ENCODE measurements at regions of chr17 and their contacts with region 1.

Region 1: DNA sequence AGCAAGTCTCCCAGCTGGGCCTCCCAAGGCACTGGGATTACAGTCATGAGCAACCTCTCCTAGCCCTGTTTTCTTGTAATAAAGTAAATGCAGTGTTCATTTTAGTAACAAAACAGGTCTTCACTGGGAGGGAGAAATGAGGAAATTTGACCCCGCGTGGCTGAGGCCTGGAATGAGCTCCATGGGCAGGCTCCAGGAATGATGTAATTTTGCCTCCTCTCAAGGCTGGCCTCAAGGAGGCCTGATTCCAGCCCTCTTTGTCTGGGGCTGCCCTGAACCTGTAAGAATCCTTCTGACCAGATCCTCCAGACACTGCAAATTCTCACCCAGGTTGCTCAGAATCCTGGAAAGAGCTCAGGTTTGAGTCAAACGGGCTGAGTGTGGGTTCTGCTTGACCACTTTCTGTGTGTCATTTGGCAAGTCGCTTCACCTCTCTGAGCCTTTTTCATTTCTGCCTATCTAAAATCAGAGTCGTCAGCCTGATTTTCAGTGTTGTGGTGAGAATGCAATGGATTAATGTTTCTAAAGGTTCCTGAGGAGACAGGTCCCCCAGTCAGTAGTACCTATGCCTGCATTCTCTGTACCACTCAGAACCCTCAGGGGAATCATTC is 57.1 kb downstream of the RAB11FIP4 start:
- DNase-seq: no peak
- H3K4me3 ChIP-seq: no peak overlapping the region
- H3K27ac ChIP-seq: no peak overlapping the region
- H3K4me1 ChIP-seq: peaks cover 0 to 4% (median 1%) of the 10 kb centered on the region in 4 donors
- H3K27me3 ChIP-seq: no peaks in the 10 kb centered on the region
- CTCF ChIP-seq: no peak
- EP300 ChIP-seq: no peak
- POLR2A ChIP-seq: no peak

Region 2: DNA sequence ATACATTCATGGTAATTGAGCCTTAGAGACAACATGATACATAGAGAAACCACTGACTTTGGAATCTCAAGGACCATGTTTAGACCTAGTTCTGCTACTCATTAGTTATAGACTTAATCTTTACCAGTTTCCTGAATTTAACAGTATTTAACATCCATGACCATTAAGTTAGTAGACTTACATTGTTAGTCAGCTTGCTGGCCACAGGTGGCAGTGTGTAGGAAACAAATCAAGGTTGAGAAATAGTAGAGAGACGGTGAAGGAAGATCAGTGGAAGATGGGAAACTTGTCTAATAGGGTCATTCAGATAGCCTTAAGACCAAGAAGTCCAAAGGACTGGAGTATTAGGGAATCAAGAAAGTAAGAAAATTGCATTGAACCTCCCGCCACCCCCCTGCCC is 182.5 kb before region 1 on chr17:
- in situ Hi-C with region 1: no loop called
- intact Hi-C with region 1: no loop called
- DNase-seq: no peak
- H3K4me3 ChIP-seq: no peak overlapping the region
- H3K27ac ChIP-seq: no peak overlapping the region
- H3K4me1 ChIP-seq: peaks cover 0 to 5% (median 0%) of the 10 kb centered on the region in 4 donors
- H3K27me3 ChIP-seq: no peaks in the 10 kb centered on the region
- CTCF ChIP-seq: no peak
- EP300 ChIP-seq: no peak
- POLR2A ChIP-seq: no peak

Region 3: GRCh38 chr17:31425282-31426040 is 23.1 kb before region 1 on chr17:
- in situ Hi-C with region 1: no loop called
- intact Hi-C with region 1: no loop called
- DNase-seq: no peak
- H3K4me3 ChIP-seq: no peak overlapping the region
- H3K27ac ChIP-seq: no peak overlapping the region
- H3K4me1 ChIP-seq: peaks cover 0 to 2% (median 0%) of the 10 kb centered on the region in 4 donors
- H3K27me3 ChIP-seq: no peaks in the 10 kb centered on the region
- CTCF ChIP-seq: no peak
- EP300 ChIP-seq: no peak
- POLR2A ChIP-seq: no peak

Region 4: GRCh38 chr17:31517524-31517923 is 69.0 kb after region 1 on chr17:
- in situ Hi-C with region 1: loop called in 1 of 4 experiments (anchors 10 kb)
- intact Hi-C with region 1: no loop called
- DNase-seq: no peak
- H3K4me3 ChIP-seq: no peak overlapping the region
- H3K27ac ChIP-seq: no peak overlapping the region
- H3K4me1 ChIP-seq: no peaks in the 10 kb centered on the region
- H3K27me3 ChIP-seq: no peaks in the 10 kb centered on the region
- CTCF ChIP-seq: peak in 2 of 5 experiments; percentile 8 to 14
- EP300 ChIP-seq: no peak
- POLR2A ChIP-seq: no peak

Region 5: DNA sequence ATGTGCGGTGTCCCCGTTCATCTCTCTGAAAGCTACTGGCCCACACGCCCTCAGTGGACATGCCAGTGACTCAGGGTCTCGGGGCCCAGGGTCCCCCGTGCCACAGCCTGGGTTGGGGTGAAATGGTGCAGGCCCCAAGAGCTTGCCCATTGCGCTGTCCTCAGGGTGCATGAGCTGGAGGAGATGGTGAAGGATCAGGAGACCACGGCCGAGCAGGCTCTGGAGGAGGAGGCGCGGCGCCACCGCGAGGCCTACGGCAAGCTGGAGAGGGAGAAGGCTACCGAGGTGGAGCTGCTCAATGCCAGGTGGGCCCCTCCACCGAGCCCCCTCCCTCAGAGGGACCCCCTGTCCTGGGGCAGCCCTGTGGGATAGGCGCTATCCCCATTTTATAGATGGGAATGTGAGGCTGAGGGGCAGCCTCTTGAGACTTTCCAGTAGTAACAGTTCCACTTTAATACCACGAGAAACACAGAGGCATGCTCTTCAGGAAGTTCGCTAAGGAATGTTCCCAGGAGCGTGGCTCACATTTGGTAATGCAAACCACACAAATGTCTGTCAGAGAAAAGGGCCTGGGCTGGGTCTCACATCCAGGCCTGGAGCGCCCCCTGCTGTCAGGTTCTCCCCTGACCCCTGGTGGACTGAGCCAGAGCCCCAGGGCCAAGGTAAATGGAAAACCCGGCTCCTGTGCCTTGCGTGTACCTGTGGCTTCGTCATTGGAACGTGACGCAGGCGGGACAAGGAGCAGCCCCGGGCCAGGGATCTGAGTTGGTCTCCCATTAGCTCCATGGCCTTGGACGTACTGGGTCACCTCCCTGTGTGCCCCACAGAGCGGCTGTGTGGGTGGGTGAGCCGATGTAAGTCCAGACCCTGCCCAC is 76.6 kb after region 1 on chr17:
- in situ Hi-C with region 1: loop called in 2 of 4 experiments (anchors 5 kb)
- intact Hi-C with region 1: no loop called
- DNase-seq: peak; percentile 91
- H3K4me3 ChIP-seq: no peak overlapping the region
- H3K27ac ChIP-seq: no peak overlapping the region
- H3K4me1 ChIP-seq: no peaks in the 10 kb centered on the region
- H3K27me3 ChIP-seq: no peaks in the 10 kb centered on the region
- CTCF ChIP-seq: peak; percentile 84 to 93 (median 92)
- EP300 ChIP-seq: no peak
- POLR2A ChIP-seq: no peak

Region 6: DNA sequence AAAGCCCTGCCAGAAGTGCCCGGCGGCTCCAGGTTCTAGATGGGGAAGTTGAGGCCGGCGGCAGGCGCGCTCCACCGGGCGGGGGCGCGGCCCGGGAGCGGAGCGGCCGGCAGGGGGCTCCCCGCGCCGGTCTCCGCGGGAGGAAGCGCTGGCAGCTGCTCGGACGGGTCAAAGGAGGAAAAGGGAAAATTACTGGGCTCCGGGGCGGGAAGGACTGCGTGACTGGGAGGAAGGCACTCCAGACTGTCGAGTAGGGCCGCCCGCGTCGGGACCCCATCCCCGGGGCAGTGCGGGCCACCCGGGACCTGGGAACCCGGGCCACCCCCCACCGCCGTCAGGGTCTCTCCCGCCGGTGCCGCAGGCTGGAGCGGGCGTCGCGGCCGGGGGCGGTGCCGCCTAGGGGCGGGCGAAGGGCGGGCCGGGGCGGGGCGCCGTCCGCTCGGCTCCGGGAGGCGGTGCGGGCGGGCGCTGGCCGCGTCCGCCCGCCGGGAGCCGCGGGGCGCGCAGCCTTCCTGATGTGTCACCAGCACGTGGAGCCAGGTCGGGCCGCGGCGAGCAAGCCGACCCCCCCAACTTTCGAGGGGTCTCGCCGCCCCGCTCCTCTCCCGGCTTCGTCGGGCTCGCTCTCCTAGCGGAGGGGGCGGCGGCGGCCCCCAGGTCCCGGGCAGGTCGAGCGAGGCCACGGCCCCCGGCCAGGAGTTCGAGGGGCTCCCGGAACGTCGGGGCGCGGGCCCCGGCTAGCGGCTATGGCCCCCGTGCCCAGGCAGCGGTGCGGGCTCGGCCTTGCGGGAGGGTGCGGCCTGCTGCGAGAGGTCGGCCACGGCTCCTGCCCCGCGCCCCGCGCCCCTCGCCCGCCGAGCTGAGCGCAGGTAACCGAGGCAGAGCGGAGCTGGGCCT is 110.4 kb after region 1 on chr17:
- in situ Hi-C with region 1: no loop called
- intact Hi-C with region 1: no loop called
- DNase-seq: peak; percentile 81
- H3K4me3 ChIP-seq: peak overlapping the region; percentile 52 to 77 (median 63)
- H3K27ac ChIP-seq: peak overlapping the region; percentile 89 to 97 (median 91)
- H3K4me1 ChIP-seq: peaks cover 15 to 42% (median 32%) of the 10 kb centered on the region in 4 donors
- H3K27me3 ChIP-seq: no peaks in the 10 kb centered on the region
- CTCF ChIP-seq: peak; percentile 34 to 86 (median 73)
- EP300 ChIP-seq: no peak
- POLR2A ChIP-seq: peak; percentile 26

Measured in transverse colon (tissue), 4 donors.